OCI-LY7 (cell line): ENCODE measurements at regions of chr17 and their contacts with region 1.

Region 1: GRCh38 chr17:81833160-81833920 is at the start of gene MCRIP1:
- DNase-seq: peak; percentile 98
- H3K4me3 ChIP-seq: peak within 1 kb of the TSS; percentile 88
- H3K27ac ChIP-seq: peak within 1 kb of the TSS; percentile 74
- H3K4me1 ChIP-seq: peaks cover 25% of the 10 kb centered on the region
- CTCF ChIP-seq: no peak
- total RNA-seq, gene MCRIP1: 249 and 288 TPM in 2 replicates

Region 2: GRCh38 chr17:81860756-81861518 is 27.6 kb after region 1 on chr17:
- CTCF ChIA-PET with region 1: no interaction called
- POLR2A ChIA-PET with region 1: no interaction called
- intact Hi-C with region 1: loop called (anchors 1 kb)
- DNase-seq: peak; percentile 100
- H3K4me3 ChIP-seq: peak overlapping the region; percentile 77
- H3K27ac ChIP-seq: peak overlapping the region; percentile 68
- H3K4me1 ChIP-seq: peaks cover 44% of the 10 kb centered on the region
- CTCF ChIP-seq: no peak